ENCODE measurements at regions of chr10 and their contacts with region 1.

Region 1: DNA sequence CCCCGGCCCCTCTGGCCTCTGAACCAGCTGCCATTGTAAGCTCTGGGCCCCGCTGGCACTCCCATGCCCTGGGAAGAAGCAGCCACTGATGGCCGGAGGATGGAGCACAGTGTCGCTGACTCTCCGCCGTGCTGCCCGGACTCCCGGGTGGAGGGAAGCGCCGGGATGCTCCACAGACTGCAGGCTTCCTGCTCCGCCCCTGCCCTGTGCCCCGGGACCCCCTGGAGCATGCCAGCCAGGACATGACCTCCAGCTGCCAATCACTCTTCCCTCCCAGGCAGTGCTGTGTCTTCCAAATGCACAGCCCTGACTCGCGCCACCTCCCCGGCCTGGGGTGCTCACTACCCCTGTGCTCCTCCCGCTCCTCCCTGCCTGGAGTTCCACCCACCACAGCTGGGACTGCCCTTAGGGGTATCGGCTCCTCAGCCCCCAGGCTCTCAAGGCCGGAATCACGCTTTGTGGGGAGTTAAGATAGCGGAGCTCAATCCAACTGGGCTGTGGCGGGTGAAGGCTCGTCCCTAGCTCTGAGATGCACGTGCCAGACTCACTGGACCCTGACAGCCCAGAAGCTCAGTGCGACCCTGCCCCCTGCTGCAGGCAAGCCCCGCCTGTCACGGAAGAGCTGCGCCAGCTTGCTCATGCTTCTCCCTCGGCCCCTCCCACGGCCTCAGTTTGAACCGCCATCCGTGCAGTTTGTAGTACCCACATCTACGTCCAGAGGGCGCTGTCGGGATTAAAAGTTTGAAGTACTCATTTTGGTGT is 142.3 kb upstream of the TCERG1L start:
- DNase-seq: peak; percentile 62
- H3K4me3 ChIP-seq: no peak overlapping the region
- H3K27ac ChIP-seq: no peak overlapping the region
- H3K4me1 ChIP-seq: no peaks in the 10 kb centered on the region
- CTCF ChIP-seq: peak; percentile 83

Region 2: DNA sequence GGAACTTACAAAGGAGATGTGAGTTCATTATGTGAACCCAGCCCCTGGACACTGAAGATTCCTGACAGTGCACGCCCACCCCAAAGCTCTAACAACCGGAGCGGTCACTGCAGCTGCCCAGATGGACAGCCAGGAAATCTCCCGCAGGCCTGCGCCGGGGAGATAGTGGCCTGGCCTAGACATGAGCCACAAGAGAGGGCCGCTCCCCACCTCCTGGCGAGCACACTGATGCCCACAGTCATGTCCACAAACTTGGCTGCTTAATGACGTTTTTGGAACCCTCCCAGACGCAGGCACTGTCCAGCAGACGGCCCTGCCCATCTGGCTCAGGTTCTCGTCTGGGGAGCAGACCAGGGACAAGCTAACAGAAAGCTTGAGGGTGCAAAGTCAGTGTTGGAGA is 176.5 kb before region 1 on chr10:
- CTCF ChIA-PET with region 1: no interaction called
- POLR2A ChIA-PET with region 1: no interaction called
- intact Hi-C with region 1: no loop called
- DNase-seq: no peak
- H3K4me3 ChIP-seq: no peak overlapping the region
- H3K27ac ChIP-seq: no peak overlapping the region
- H3K4me1 ChIP-seq: no peaks in the 10 kb centered on the region
- CTCF ChIP-seq: no peak

Region 3: DNA sequence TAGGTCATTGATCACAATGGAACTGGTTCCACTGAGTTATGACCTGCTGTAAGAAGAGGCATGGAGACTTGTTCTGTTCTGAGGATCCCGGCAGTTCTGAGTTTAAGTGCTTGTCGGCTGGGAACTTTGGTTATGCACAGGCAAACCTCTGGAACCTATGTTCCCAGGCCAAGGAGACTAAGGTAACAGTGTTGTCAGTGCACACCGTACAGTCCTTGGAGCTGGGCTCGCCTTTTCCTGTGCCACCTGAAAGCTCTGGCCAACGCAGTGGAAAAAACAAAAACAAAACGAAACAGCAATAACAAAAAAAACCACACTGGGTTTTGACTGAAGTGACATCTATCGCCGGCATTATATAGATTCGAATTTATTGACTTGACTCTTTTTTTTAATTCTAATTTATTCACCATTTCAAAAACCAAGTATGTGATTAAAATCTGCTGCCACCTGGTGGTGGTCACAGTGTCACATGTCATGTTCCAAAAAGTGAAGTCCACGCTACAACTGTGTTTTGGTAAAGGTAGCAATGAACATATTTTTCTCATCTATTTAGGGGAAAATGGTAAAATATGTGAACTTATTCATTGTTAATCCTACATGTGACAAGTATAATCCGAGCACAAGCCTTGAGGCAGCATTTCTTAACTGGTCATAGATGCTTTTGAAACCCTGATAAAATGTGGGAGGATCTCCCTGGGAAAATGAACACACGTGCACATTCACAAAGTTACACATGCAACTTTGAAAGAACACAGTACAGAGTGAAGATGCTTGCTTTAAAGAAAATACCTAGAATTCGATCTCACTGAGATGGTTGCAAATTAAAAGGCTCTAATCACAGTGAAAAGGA is 333.2 kb after region 1 on chr10:
- CTCF ChIA-PET with region 1: no interaction called
- POLR2A ChIA-PET with region 1: no interaction called
- intact Hi-C with region 1: loop called (anchors 2 kb)
- DNase-seq: peak; percentile 52
- H3K4me3 ChIP-seq: no peak overlapping the region
- H3K27ac ChIP-seq: no peak overlapping the region
- H3K4me1 ChIP-seq: no peaks in the 10 kb centered on the region
- CTCF ChIP-seq: peak; percentile 94

Region 4: DNA sequence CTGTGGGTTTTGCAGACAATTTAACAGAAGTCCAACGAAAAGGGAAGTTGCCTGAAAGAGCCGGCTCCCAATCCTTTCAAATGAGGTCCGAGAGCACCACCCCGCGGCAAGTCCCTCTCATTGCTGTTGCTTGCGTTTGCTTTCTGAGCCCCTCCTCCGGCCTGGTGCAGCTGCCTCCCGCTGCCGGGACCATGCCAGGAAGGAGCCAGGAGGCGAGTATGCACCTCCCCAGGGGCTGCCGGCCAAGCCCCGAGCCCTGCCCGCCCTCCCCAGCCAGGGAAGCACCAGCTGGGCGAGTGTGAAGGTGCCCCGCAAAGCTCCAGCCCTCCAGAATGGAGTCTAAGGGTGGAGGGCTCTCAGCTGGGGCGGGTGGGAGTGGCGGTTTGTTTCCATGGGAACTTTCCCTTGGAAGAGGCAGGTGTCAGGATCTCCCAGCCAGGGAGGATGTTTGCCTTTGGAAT is 421.2 kb after region 1 on chr10:
- CTCF ChIA-PET with region 1: no interaction called
- POLR2A ChIA-PET with region 1: no interaction called
- intact Hi-C with region 1: loop called (anchors 1 kb)
- DNase-seq: peak; percentile 80
- H3K4me3 ChIP-seq: no peak overlapping the region
- H3K27ac ChIP-seq: no peak overlapping the region
- H3K4me1 ChIP-seq: no peaks in the 10 kb centered on the region
- CTCF ChIP-seq: peak; percentile 83